ENCODE measurements at regions of chr2 and their contacts with region 1.

Region 1: DNA sequence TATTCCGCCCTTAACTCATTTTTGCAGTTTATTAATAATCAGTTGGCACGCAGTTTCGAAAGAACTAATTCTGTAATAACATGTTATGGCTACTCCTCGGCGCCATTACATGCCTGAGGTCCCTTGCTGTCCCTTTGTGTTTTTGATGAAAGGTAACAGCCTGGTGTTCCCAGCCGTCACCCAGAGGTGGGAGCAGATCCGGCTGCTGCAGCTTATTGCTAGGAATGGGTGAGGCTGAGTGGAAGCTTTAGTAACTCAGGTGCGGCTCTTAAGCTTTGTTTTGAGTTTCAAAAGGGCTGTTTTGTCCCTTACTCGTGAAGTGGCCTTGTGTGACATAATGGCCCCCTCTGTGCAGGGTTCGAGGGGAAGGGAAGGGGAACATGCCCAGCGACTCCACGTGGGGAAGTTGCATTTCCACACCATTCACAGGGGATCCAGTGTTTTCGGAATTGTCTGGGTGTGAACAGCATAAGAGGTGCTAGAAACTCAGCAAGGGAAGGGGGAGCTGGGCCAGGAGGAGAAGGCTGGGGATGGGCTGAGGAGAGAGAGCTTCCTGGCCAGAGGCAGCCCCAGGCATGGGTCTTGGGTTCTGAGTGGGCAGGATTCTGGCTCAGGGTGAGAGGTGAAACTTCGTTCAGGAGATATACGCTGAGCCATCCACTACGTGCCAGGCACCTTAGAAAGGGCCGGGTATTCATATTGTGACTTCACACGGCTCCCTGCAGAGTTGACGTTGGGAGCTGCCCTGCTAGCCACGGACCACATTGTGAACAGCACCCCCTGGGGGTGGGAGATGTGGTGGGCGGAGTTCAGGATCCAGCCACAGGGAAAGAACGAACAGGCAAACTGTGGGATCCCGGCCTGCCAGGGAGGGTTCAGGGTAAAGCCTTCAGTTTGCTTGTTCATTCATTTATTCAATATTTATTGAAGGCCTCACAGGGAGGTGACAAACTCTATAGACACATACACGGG is 84.4 kb downstream of the TGOLN2 start:
- DNase-seq: peak in 9 of 10 donors; percentile 30 to 74 (median 58)
- H3K4me3 ChIP-seq: no peak overlapping the region
- H3K27ac ChIP-seq: peak overlapping the region in 1 of 59 donors; percentile 36
- H3K27me3 ChIP-seq: no peaks in the 10 kb centered on the region
- CTCF ChIP-seq: peak in 55 of 56 donors; percentile 48 to 86 (median 68)

Region 2: DNA sequence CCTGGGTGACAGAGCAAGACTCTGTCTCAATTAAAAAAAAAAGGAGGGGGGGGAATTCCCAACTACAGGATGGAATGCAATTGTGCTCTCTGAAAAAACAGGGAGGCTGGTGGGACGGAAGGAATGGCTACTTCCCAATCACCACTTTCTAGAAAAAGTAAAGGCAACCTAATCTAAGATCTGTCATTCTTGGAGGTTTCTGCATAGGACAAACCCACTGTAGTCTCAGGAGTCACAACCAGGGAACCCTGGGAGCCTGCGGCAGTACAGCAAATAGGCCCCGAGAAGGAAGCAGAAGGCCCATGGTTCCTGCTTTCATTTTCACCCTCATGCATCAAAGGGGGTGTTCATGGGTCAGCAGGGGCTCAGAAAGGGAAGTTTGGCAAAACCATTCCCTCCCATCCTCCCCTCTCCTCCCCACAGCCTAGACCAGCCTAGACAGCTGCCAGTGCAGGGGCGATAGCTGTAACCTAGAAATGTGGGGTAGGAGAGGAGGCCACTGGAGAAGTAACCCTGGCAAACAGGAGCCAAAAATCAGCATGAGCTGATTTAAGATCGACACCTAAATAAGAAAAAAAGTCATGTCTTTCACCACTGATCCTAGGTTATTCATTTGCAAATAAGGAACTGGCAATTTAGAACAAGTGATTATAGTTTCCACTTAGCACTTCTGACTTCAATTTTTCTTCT is 410.5 kb before region 1 on chr2:
- intact Hi-C with region 1: no loop called
- DNase-seq: peak in 2 of 10 donors; percentile 10 to 42
- H3K4me3 ChIP-seq: no peak overlapping the region
- H3K27ac ChIP-seq: peak overlapping the region in 1 of 59 donors; percentile 26
- H3K27me3 ChIP-seq: no peaks in the 10 kb centered on the region
- CTCF ChIP-seq: no peak

Region 3: DNA sequence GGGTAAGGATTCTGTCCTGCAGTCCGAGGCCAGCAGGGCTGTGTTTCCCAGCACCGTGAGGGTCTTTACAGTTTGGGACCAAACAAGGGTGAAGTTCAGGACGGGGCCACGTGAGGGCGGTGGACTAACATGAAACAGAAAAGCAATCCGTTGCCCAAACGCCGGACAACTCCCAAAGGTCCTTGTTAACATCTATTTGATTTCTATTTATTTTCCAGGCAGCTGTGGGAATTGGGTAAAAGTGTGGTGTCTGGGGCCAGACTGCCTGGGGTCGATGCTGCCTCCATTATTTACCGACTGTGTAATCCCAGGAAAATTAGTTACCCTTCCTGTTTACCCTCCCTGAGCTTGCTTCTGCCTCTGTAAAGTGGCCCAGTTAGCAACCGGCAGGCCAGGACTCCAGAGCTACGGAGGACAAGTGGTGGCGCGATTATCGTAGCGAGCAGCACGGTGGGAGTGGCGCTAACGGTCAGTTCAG is 176.5 kb before region 1 on chr2:
- intact Hi-C with region 1: loop called (anchors 2 to 5 kb)
- DNase-seq: peak; percentile 43 to 78 (median 68)
- H3K4me3 ChIP-seq: peak overlapping the region in 56 of 59 donors; percentile 2 to 61 (median 40)
- H3K27ac ChIP-seq: no peak overlapping the region
- H3K27me3 ChIP-seq: no peaks in the 10 kb centered on the region
- CTCF ChIP-seq: peak; percentile 44 to 95 (median 82)

Region 4: DNA sequence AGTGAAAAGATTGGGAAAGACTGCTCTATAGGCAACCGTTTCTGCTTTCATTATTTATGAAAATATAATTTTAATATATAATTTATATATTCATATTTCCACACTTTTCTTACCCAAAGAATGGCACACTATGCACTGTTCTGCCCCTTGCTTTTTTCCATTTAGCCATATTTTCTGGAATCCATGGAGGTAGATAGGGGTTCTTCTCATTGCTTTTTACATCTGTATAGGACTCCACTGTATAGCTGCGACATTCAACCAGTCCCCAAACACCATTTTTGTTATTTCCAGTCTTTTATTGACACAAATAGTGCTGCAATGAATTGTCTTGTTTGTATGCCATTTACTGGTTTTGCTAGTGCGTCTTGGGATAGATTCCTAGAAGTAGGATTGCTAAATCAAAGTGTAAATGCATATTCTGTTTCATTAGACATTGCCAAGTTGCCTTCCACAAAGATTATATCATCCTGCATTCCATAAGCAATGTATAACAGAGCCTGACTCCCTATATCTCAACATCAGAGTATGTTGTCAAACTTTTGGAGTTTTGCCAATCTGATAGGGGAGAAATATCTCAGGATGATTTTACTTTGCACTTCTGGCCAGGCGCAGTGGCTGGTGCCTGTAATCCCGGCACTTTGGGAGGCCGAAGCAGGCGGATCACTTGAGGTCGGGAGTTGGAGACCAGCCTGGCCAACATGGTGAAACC is 136.7 kb before region 1 on chr2:
- intact Hi-C with region 1: no loop called
- DNase-seq: no peak
- H3K4me3 ChIP-seq: no peak overlapping the region
- H3K27ac ChIP-seq: no peak overlapping the region
- H3K27me3 ChIP-seq: peaks cover 0 to 3% (median 0%) of the 10 kb centered on the region in 45 donors
- CTCF ChIP-seq: no peak

Region 5: DNA sequence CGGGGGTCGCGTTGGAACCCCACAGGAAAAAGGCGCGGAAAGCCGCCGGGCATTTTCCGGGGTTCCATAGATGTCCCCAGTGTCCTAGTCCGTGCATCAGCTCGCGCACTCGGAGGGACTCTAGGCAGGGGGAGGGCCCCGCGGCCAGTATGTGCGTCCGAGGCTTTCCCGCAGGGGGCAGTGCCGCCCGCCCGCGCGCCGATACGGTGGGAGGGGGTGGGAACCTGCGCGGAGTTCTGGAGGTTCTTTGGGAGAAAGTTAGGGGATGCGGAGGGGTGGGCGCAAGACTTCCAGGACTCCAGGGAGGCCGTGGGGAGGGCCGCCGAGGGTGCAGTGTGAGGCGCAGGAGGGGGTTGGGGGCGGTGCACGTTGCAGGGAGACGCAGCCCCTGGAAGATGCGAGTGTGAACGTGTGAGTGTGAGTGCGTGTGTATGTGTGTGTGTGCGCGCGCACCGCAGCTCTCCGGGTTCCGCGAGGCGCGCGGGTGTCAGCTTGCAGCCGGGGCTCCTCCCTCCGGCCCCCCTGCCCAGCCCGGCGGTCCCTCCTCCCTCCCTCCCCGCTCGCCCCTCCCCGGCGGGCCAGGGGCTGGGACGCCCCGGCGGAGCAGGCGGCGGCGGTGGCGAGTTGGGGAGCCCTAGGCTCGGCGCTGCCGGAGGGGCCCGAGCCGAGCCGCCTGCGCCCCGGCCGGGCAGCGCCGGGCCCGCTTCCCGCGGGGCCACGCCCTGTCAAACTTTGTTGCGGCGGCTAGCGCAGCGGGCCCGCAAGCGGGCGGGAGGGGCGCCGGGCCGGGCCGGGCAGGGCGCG is 110.4 kb before region 1 on chr2 and contains the start of gene TCF7L1:
- intact Hi-C with region 1: loop called (anchors 10 kb)
- DNase-seq: peak; percentile 6 to 63 (median 39)
- H3K4me3 ChIP-seq: peak within 1 kb of the TSS; percentile 36 to 74 (median 64)
- H3K27ac ChIP-seq: peak within 1 kb of the TSS in 32 of 59 donors; percentile 2 to 79 (median 60)
- H3K27me3 ChIP-seq: peaks cover 0 to 44% (median 17%) of the 10 kb centered on the region in 45 donors
- CTCF ChIP-seq: peak; percentile 28 to 79 (median 64)
- total RNA-seq, gene TCF7L1: 2.1 to 12.7 (median 4.4) TPM

Region 6: GRCh38 chr2:85181134-85181631 is 62.2 kb before region 1 on chr2:
- intact Hi-C with region 1: loop called in 1 of 2 experiments (anchors 10 kb)
- DNase-seq: no peak
- H3K4me3 ChIP-seq: no peak overlapping the region
- H3K27ac ChIP-seq: no peak overlapping the region
- H3K27me3 ChIP-seq: peaks cover 0 to 4% (median 0%) of the 10 kb centered on the region in 45 donors
- CTCF ChIP-seq: peak in 7 of 56 donors; percentile 7 to 18 (median 14)

Region 7: GRCh38 chr2:85327822-85328617 is 84.6 kb after region 1 on chr2 and contains the start of gene TGOLN2:
- intact Hi-C with region 1: no loop called
- DNase-seq: peak; percentile 75 to 94 (median 89)
- H3K4me3 ChIP-seq: peak within 1 kb of the TSS; percentile 44 to 94 (median 79)
- H3K27ac ChIP-seq: peak within 1 kb of the TSS; percentile 72 to 100 (median 96)
- H3K27me3 ChIP-seq: no peaks in the 10 kb centered on the region
- CTCF ChIP-seq: peak in 44 of 56 donors; percentile 3 to 62 (median 32)
- total RNA-seq, gene TGOLN2: 90.8 to 148 (median 114) TPM

Region 8: DNA sequence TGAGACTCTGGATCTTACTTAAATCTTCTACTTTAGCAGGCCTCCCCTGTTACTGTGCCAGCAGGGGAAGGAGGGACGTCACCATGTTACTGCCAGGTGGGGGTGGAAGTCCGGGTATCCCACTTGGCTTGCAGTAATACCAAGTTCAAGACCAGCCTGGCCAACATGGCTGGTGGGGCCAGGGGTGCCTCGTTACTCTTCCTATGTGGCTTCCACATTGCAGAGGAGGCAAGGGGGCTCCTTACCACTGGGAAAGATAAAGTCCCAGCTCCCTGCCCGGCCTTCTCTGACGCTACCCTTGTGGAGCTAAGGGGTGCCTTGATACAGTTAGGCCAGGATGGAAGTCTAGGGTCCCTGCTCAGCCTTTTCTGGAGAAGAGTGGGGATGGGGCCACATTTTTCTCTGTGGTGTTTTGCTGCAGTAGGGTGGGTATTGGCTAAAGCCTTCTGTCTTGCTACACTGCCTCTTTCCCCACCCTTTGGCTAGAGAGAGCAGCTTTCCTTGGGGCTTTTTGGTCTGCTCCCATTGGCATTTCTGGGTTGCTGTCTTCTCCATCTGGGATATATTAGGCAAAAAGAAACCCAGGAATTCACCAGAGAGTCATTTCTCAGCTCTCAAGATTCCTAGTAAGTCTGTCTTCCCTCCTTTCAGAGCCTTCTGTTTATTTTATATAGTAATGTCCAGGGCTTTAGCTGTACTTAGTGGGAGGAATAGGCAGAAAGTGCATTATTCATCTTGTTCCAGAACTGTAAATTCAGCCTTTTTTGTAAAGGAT is 133.1 kb after region 1 on chr2:
- intact Hi-C with region 1: no loop called
- DNase-seq: no peak
- H3K4me3 ChIP-seq: no peak overlapping the region
- H3K27ac ChIP-seq: no peak overlapping the region
- H3K27me3 ChIP-seq: no peaks in the 10 kb centered on the region
- CTCF ChIP-seq: no peak

Measured in dorsolateral prefrontal cortex (tissue), 120 donors.